Naive thymus-derived CD4-positive, alpha-beta T cell (primary cell): ENCODE measurements at regions of chr5 and their contacts with region 1.

Region 1: GRCh38 chr5:95554647-95555548 is at the starts of genes ARSK and SKIC3:
- DNase-seq: peak; percentile 76 to 98 (median 97)
- ATAC-seq: peak; percentile 93
- H3K4me3 ChIP-seq: peak within 1 kb of the TSS; percentile 71
- H3K4me3 Mint-ChIP-seq: peak within 1 kb of the TSS; percentile 90 to 100 (median 96)
- H3K27ac ChIP-seq: peak within 1 kb of the TSS; percentile 83
- H3K27ac Mint-ChIP-seq: peak within 1 kb of the TSS; percentile 92 to 98 (median 94)
- H3K4me1 ChIP-seq: peaks cover 20 to 27% of the 10 kb centered on the region in 2 donors
- H3K4me1 Mint-ChIP-seq: peaks cover 26 to 66% (median 47%) of the 10 kb centered on the region in 7 donors
- H3K27me3 ChIP-seq: no peaks in the 10 kb centered on the region
- H3K27me3 Mint-ChIP-seq: peaks cover 0 to 2% (median 0%) of the 10 kb centered on the region in 5 donors
- total RNA-seq, gene ARSK: 2.5 to 8.5 (median 4.5) TPM
- total RNA-seq, gene SKIC3: 74.6 to 103 (median 81.0) TPM

Region 2: DNA sequence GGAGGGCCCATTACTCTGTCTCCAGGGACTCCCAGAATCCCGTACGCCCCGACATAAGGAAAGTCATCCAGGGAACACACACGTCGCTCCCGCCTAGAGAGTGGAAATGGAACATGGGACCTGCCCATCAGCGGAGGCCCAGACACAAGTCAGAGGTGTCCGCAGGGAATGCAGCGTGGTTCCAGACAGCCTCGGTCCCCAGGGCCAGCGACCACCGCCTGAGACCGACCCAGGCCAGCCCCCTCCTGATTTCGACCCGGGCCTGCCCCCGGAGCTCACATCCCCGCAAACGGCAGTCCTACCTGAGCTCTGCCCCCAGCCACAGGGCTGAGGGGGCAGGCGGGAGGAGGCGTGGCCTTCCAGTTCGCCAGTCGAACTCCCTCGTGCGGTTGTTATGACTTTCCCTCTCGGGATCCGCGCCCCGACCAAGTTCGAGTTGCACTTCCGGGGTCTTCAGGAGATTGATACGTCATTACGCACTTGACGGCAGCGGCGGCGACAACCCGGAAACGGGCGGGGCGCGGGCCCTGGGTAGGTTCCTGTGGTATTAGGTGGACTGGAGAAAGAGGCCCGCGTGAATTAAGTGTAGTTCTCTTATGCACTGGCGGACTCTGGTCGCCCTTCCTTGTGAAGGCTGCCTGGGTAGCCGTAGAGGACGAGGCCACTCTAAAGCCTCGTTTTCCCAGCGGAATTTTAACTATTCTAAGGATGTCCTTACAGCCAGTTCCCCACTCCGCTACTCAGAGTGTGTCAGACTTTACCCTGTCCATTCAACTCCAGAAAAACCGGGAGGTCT is 1443.5 kb before region 1 on chr5:
- CTCF ChIA-PET with region 1: no interaction called
- POLR2A ChIA-PET with region 1: no interaction called
- intact Hi-C with region 1: loop called in 1 of 2 experiments (anchors 1 kb)
- DNase-seq: peak; percentile 77 to 93 (median 90)
- ATAC-seq: peak; percentile 96
- H3K4me3 ChIP-seq: peak overlapping the region; percentile 90
- H3K4me3 Mint-ChIP-seq: peak overlapping the region; percentile 88 to 97 (median 95)
- H3K27ac ChIP-seq: peak overlapping the region; percentile 85
- H3K27ac Mint-ChIP-seq: peak overlapping the region; percentile 93 to 97 (median 96)
- H3K4me1 ChIP-seq: peaks cover 8 to 10% of the 10 kb centered on the region in 2 donors
- H3K4me1 Mint-ChIP-seq: peaks cover 21 to 50% (median 47%) of the 10 kb centered on the region in 7 donors
- H3K27me3 ChIP-seq: no peaks in the 10 kb centered on the region
- H3K27me3 Mint-ChIP-seq: peaks cover 0 to 15% (median 14%) of the 10 kb centered on the region in 5 donors

Region 3: GRCh38 chr5:95620030-95620869 is 65.4 kb after region 1 on chr5 and contains the start of gene GPR150:
- CTCF ChIA-PET with region 1: no interaction called
- POLR2A ChIA-PET with region 1: interaction called, 25 read pairs
- intact Hi-C with region 1: loop called (anchors 1 kb)
- DNase-seq: peak; percentile 44 to 67 (median 61)
- ATAC-seq: peak; percentile 77
- H3K4me3 ChIP-seq: peak within 1 kb of the TSS; percentile 75
- H3K4me3 Mint-ChIP-seq: peak within 1 kb of the TSS; percentile 88 to 96 (median 92)
- H3K27ac ChIP-seq: peak within 1 kb of the TSS; percentile 71
- H3K27ac Mint-ChIP-seq: peak within 1 kb of the TSS; percentile 60 to 87 (median 81)
- H3K4me1 ChIP-seq: peaks cover 22 to 46% of the 10 kb centered on the region in 2 donors
- H3K4me1 Mint-ChIP-seq: peaks cover 34 to 82% (median 67%) of the 10 kb centered on the region in 7 donors
- H3K27me3 ChIP-seq: no peaks in the 10 kb centered on the region
- H3K27me3 Mint-ChIP-seq: peaks cover 0 to 18% (median 0%) of the 10 kb centered on the region in 5 donors
- total RNA-seq, gene GPR150: 0.48 to 1.5 (median 1.1) TPM

Region 4: DNA sequence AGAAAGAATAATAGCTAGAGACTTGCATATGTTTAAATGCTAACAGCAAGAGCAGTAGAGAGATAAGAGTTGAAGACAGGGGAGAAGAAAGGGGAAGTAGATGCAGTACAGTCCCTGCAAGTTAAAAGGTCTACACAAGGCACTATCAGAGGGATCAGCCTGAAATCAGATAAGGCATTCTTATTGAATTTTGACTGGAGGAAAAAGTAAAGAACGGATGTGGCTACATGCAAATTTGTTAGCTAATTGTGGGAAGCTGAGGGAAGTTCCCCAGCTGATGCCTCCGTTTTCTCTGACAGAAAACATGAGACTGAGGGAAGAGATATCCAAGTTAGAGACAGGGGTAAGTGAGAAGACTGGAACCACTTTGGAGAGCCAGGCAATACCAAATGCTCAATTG is 163.3 kb after region 1 on chr5:
- CTCF ChIA-PET with region 1: no interaction called
- POLR2A ChIA-PET with region 1: no interaction called
- intact Hi-C with region 1: loop called in 1 of 2 experiments (anchors 1 kb)
- DNase-seq: peak in 6 of 9 donors; percentile 21 to 60 (median 40)
- ATAC-seq: peak; percentile 94
- H3K4me3 ChIP-seq: no peak overlapping the region
- H3K4me3 Mint-ChIP-seq: no peak overlapping the region
- H3K27ac ChIP-seq: no peak overlapping the region
- H3K27ac Mint-ChIP-seq: no peak overlapping the region
- H3K4me1 ChIP-seq: peaks cover 9 to 22% of the 10 kb centered on the region in 2 donors
- H3K4me1 Mint-ChIP-seq: peaks cover 8 to 29% (median 16%) of the 10 kb centered on the region in 7 donors
- H3K27me3 ChIP-seq: no peaks in the 10 kb centered on the region
- H3K27me3 Mint-ChIP-seq: peaks cover 0 to 34% (median 0%) of the 10 kb centered on the region in 5 donors

Region 5: DNA sequence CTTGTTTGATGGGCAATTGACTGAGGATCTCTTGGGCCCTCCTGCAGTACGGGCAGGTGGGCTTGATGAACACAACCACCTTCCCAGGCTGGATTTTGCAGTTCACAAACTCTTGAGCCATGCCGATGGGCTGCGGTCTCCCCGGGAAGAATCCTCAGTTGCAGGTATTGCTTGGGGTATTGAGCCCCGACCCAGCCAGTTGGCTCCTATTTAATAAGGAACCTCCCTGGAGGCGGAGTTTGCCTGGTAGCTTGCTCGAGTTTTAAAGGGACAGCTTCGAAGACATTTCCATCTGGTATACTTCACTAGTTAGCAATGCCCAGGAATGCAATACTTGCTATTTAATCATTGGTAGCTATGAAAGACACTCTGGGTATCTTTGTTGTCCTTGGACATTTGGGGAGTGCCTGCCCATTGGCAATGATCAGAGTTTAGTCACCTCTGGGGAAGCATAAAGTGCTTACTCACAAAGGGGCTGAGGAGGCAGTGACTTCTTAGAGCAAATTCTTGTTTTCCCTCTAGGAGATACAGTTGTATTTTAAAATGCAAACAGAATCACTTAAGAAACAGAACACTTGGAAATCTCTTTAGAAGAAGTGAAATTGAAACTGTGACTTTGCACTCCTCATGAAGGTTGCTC is 267.8 kb after region 1 on chr5 and contains the start of gene GLRX:
- CTCF ChIA-PET with region 1: no interaction called
- POLR2A ChIA-PET with region 1: no interaction called
- intact Hi-C with region 1: loop called (anchors 2 to 5 kb)
- DNase-seq: peak in 8 of 9 donors; percentile 48 to 62 (median 58)
- ATAC-seq: peak; percentile 52
- H3K4me3 ChIP-seq: peak within 1 kb of the TSS; percentile 93
- H3K4me3 Mint-ChIP-seq: peak within 1 kb of the TSS; percentile 91 to 100 (median 99)
- H3K27ac ChIP-seq: peak within 1 kb of the TSS; percentile 84
- H3K27ac Mint-ChIP-seq: peak within 1 kb of the TSS; percentile 91 to 97 (median 95)
- H3K4me1 ChIP-seq: peaks cover 38% of the 10 kb centered on the region in 2 donors
- H3K4me1 Mint-ChIP-seq: peaks cover 53 to 78% (median 61%) of the 10 kb centered on the region in 7 donors
- H3K27me3 ChIP-seq: no peaks in the 10 kb centered on the region
- H3K27me3 Mint-ChIP-seq: no peaks in the 10 kb centered on the region
- total RNA-seq, gene GLRX: 26.3 to 89.5 (median 55.6) TPM

Region 6: DNA sequence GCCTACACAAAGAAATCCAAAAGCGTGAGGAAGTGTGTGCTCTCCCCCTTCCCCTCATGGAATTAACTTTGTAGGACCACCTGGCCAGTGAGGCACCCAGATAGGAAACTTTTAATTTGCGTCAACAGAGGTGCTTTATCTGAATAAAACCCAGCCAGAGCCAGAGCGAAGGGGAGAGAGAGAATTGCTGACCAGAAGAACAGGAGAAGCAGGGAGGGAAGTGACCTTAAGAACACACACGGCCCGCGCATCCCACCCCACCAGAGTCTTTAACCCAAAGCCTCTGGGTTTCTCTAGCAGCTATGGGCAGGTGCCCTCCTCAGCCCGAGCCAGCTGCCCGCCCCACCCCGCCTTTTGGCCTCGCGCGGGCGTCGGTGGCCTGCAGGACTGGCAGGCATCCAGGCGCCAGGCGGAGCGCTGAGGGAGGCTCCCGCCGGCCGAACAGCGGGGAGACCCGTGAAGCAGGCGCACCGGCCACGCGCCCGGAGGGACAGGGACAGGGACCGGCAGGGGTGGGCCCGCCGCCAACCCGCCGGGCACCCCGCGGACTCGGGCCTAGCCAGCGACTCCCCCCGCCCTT is 1252.3 kb after region 1 on chr5:
- CTCF ChIA-PET with region 1: no interaction called
- POLR2A ChIA-PET with region 1: no interaction called
- intact Hi-C with region 1: loop called (anchors 1 to 10 kb)
- DNase-seq: peak in 1 of 9 donors; percentile 67
- ATAC-seq: peak; percentile 17
- H3K4me3 ChIP-seq: peak overlapping the region; percentile 85
- H3K4me3 Mint-ChIP-seq: peak overlapping the region; percentile 90 to 100 (median 96)
- H3K27ac ChIP-seq: peak overlapping the region; percentile 99
- H3K27ac Mint-ChIP-seq: peak overlapping the region; percentile 98 to 100 (median 99)
- H3K4me1 ChIP-seq: peaks cover 40 to 69% of the 10 kb centered on the region in 2 donors
- H3K4me1 Mint-ChIP-seq: peaks cover 57 to 92% (median 89%) of the 10 kb centered on the region in 7 donors
- H3K27me3 ChIP-seq: no peaks in the 10 kb centered on the region
- H3K27me3 Mint-ChIP-seq: peaks cover 0 to 2% (median 0%) of the 10 kb centered on the region in 5 donors